T-cell (primary cell): ENCODE measurements at regions of chr18 and their contacts with region 1.

Region 1: DNA sequence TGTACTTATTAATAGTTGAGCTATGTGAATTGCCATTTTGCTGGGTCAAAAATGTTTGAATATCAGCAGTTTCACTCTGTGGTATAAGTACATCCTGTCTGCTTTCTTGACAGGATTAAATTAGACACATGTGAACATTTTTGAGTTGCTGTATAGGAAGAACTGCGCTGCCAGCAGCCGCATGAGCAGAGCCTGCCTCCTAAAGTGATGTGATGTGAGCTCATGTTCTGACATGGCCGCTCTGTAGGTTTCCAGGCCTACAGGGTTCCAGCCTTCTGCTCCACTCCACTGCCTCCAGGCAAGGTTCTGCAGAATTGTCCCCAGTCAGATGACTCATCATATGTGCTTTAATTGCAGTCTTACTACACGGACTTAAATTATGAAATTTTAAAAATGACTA is 119.7 kb upstream of the NFATC1 start:
- DNase-seq: no peak
- ATAC-seq: no peak
- H3K4me3 ChIP-seq: no peak overlapping the region
- H3K4me3 Mint-ChIP-seq: no peak overlapping the region
- H3K27ac ChIP-seq: peak overlapping the region; percentile 22
- H3K27ac Mint-ChIP-seq: no peak overlapping the region
- H3K4me1 ChIP-seq: peaks cover 0 to 3% of the 10 kb centered on the region in 2 experiments
- H3K4me1 Mint-ChIP-seq: peaks cover 13 to 21% (median 19%) of the 10 kb centered on the region in 3 donors
- H3K27me3 ChIP-seq: no peaks in the 10 kb centered on the region
- H3K27me3 Mint-ChIP-seq: no peaks in the 10 kb centered on the region

Region 2: GRCh38 chr18:79258447-79258846 is 17.5 kb before region 1 on chr18:
- CTCF ChIA-PET with region 1: no interaction called
- POLR2A ChIA-PET with region 1: no interaction called
- DNase-seq: no peak
- ATAC-seq: no peak
- H3K4me3 ChIP-seq: no peak overlapping the region
- H3K4me3 Mint-ChIP-seq: no peak overlapping the region
- H3K27ac ChIP-seq: no peak overlapping the region
- H3K27ac Mint-ChIP-seq: no peak overlapping the region
- H3K4me1 ChIP-seq: no peaks in the 10 kb centered on the region
- H3K4me1 Mint-ChIP-seq: peaks cover 0 to 6% (median 0%) of the 10 kb centered on the region in 3 donors
- H3K27me3 ChIP-seq: no peaks in the 10 kb centered on the region
- H3K27me3 Mint-ChIP-seq: no peaks in the 10 kb centered on the region

Region 3: GRCh38 chr18:79294235-79294634 is 18.2 kb after region 1 on chr18:
- CTCF ChIA-PET with region 1: no interaction called
- POLR2A ChIA-PET with region 1: interaction called in 1 of 2 experiments, 10 read pairs
- DNase-seq: no peak
- ATAC-seq: no peak
- H3K4me3 ChIP-seq: no peak overlapping the region
- H3K4me3 Mint-ChIP-seq: no peak overlapping the region
- H3K27ac ChIP-seq: no peak overlapping the region
- H3K27ac Mint-ChIP-seq: no peak overlapping the region
- H3K4me1 ChIP-seq: no peaks in the 10 kb centered on the region
- H3K4me1 Mint-ChIP-seq: peaks cover 9 to 17% (median 15%) of the 10 kb centered on the region in 3 donors
- H3K27me3 ChIP-seq: no peaks in the 10 kb centered on the region
- H3K27me3 Mint-ChIP-seq: no peaks in the 10 kb centered on the region